ENCODE measurements at regions of chr7 and their contacts with region 1.

Region 1: DNA sequence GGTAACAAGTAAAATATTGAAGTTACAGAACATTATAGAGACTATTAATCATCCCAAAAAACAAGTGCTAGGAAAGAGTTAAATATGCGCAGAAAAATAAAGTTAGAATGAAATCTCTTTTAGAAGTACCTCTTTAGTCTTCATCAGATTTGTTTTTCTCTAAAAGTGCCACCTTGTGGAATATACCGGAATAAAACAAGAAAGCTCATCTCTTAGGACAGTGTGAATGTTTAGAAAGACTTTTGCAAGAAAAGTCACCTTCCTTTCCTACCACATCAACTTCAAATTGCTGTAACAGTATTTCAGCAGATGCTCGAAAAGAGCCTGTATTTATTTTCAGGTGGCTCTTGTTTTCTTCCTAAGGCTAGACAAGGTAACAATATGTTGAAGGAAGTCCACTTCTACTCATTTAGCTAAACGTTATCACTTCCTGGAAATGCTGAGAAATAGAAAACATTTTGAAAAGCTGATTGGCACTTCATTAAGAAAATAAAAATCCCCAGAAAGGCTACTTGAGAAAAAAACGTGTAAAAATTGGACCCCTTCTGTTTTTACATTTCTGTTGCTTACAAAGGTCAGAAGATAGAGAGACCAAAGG is 19.8 kb upstream of the FAM133B start:
- DNase-seq: no peak
- H3K4me3 ChIP-seq: no peak overlapping the region
- H3K4me3 Mint-ChIP-seq: no peak overlapping the region
- H3K27ac ChIP-seq: no peak overlapping the region
- H3K27ac Mint-ChIP-seq: peak overlapping the region in 5 of 8 donors; percentile 12 to 62 (median 58)
- H3K4me1 ChIP-seq: no peaks in the 10 kb centered on the region
- H3K4me1 Mint-ChIP-seq: peaks cover 4 to 9% (median 7%) of the 10 kb centered on the region in 3 donors
- H3K27me3 ChIP-seq: no peaks in the 10 kb centered on the region
- H3K27me3 Mint-ChIP-seq: no peaks in the 10 kb centered on the region

Region 2: GRCh38 chr7:92221756-92222155 is 388.3 kb before region 1 on chr7:
- CTCF ChIA-PET with region 1: no interaction called
- POLR2A ChIA-PET with region 1: no interaction called
- DNase-seq: no peak
- H3K4me3 ChIP-seq: no peak overlapping the region
- H3K4me3 Mint-ChIP-seq: no peak overlapping the region
- H3K27ac ChIP-seq: no peak overlapping the region
- H3K27ac Mint-ChIP-seq: no peak overlapping the region
- H3K4me1 ChIP-seq: no peaks in the 10 kb centered on the region
- H3K4me1 Mint-ChIP-seq: peaks cover 0 to 1% (median 0%) of the 10 kb centered on the region in 3 donors
- H3K27me3 ChIP-seq: no peaks in the 10 kb centered on the region
- H3K27me3 Mint-ChIP-seq: no peaks in the 10 kb centered on the region

Region 3: DNA sequence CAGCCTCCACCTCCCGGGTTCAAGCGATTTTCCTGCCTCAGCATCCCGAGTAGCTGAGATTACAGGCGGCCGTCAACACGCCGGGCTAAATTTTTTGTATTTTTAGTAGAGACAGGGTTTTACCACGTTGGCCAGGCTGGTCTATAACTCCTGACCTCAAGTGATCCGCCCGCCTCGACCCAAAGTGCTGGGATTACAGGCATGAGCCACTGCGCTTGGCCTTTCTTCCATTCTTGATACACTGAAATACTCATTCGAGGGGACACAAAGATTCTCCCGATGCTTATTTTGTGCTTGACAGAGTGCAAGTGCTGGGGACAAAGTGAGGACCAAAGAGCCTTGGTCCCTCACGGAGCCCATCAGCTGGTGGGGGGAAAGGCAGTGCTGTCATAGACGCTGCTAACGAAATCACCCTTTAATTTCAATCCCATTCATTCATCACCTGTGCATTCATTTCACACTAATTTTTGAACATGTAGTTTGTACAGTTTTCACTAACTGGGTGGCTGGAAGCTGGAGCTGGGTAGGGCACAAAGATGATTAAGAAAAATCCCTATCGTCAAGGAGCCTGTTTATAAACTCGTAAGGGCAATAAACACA is 19.2 kb before region 1 on chr7:
- CTCF ChIA-PET with region 1: interaction called, 7 read pairs
- POLR2A ChIA-PET with region 1: interaction called, 16 read pairs
- DNase-seq: no peak
- H3K4me3 ChIP-seq: peak overlapping the region; percentile 54
- H3K4me3 Mint-ChIP-seq: peak overlapping the region; percentile 79 to 99 (median 96)
- H3K27ac ChIP-seq: no peak overlapping the region
- H3K27ac Mint-ChIP-seq: peak overlapping the region in 3 of 8 donors; percentile 17 to 94 (median 35)
- H3K4me1 ChIP-seq: peaks cover 34% of the 10 kb centered on the region
- H3K4me1 Mint-ChIP-seq: peaks cover 37 to 49% (median 44%) of the 10 kb centered on the region in 3 donors
- H3K27me3 ChIP-seq: no peaks in the 10 kb centered on the region
- H3K27me3 Mint-ChIP-seq: peaks cover 6 to 7% of the 10 kb centered on the region in 2 donors

Region 4: GRCh38 chr7:92778972-92779371 is 169.0 kb after region 1 on chr7:
- CTCF ChIA-PET with region 1: no interaction called
- POLR2A ChIA-PET with region 1: no interaction called
- DNase-seq: no peak
- H3K4me3 ChIP-seq: no peak overlapping the region
- H3K4me3 Mint-ChIP-seq: no peak overlapping the region
- H3K27ac ChIP-seq: no peak overlapping the region
- H3K27ac Mint-ChIP-seq: no peak overlapping the region
- H3K4me1 ChIP-seq: no peaks in the 10 kb centered on the region
- H3K4me1 Mint-ChIP-seq: peaks cover 31 to 49% (median 42%) of the 10 kb centered on the region in 3 donors
- H3K27me3 ChIP-seq: no peaks in the 10 kb centered on the region
- H3K27me3 Mint-ChIP-seq: no peaks in the 10 kb centered on the region

Region 5: DNA sequence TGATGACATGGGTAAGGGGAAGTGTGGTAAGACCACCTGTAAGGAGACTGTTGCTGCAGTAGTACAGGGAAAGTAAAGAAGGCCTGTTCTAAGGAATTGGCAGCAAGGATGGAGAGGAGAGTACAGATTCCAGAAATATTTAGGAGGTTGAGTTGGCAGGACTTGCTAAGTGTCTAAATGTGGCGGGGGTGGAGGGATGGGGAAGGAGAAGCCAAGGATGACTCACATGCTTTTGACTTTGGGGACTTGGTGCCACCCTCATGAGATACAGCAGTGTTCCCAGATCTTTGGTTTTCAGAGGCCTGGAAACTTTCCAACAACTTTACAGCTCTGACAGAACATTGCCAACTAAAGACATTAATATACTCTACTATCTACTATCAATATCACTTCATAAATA is 181.0 kb after region 1 on chr7:
- CTCF ChIA-PET with region 1: no interaction called
- POLR2A ChIA-PET with region 1: no interaction called
- DNase-seq: no peak
- H3K4me3 ChIP-seq: no peak overlapping the region
- H3K4me3 Mint-ChIP-seq: peak overlapping the region in 1 of 7 donors; percentile 41
- H3K27ac ChIP-seq: no peak overlapping the region
- H3K27ac Mint-ChIP-seq: peak overlapping the region in 1 of 8 donors; percentile 5
- H3K4me1 ChIP-seq: peaks cover 8% of the 10 kb centered on the region
- H3K4me1 Mint-ChIP-seq: peaks cover 41 to 61% (median 57%) of the 10 kb centered on the region in 3 donors
- H3K27me3 ChIP-seq: no peaks in the 10 kb centered on the region
- H3K27me3 Mint-ChIP-seq: peaks cover 0 to 1% of the 10 kb centered on the region in 2 donors